Right ventricle myocardium superior (tissue), 1 donor: ENCODE measurements at regions of chr1 and their contacts with region 1.

Region 1: GRCh38 chr1:24201941-24202440 is 14.9 kb upstream of the IFNLR1 start:
- DNase-seq: peak; percentile 71
- ATAC-seq: peak; percentile 81

Region 2: DNA sequence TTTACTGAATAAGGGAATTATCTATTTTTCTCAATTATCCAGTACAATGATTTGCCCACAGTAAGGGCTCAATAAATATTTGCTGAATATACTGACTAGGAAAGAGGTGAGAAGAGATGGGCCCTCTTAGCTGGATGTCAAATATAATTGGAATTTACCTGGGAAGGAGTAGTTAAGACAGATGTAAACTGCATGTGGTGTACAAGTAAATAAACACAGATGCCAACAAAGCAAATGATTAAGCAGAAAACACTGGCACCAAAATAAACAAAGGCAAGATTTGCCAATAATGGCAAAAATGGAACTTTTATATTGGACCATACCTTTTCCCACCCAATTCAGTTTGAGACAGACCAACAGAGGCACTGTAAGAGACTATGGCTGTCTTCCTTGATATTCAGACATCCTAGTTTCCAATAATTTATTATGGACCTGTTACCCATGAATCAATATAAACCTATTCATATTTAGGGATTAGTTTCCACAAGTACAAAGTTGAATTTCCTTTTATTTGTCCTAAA is 235.0 kb before region 1 on chr1:
- intact Hi-C with region 1: no loop called
- DNase-seq: no peak
- ATAC-seq: no peak

Region 3: DNA sequence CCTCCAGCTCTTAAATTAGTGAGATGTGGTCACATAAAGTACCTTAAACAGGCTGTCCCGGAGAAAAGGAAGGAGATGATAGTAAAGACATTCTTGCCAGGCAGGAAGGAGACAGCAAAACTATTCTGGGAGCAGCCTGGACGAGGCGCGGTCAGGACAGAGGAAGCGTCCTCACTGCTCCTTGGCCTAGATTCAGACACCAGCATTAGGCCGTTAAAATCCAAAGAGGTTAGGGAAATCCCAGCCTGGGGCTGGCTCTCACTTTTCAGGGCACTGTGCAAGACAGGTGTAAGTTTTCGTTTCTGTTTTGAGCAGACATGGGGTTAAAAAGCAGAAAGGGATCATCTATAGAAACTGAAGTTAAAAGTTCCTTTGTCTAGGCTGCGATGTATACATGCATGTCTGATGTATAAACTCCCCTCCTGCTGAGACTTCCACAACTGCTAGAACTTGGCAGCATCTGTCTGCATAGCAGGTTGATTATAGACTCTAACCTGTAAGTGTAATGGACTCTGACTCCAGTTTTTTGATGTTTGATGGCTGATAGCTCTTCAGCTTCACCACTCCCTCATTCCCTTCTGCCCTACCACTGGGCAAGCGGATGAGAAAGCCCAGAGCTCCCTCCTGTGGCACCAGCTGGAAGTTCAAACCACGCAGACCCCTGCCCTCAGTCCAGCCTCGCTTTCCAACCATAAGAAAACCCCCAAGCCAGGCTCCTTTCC is 190.1 kb after region 1 on chr1:
- intact Hi-C with region 1: loop called (anchors 1 kb)
- DNase-seq: peak; percentile 62
- ATAC-seq: peak; percentile 90

Region 4: DNA sequence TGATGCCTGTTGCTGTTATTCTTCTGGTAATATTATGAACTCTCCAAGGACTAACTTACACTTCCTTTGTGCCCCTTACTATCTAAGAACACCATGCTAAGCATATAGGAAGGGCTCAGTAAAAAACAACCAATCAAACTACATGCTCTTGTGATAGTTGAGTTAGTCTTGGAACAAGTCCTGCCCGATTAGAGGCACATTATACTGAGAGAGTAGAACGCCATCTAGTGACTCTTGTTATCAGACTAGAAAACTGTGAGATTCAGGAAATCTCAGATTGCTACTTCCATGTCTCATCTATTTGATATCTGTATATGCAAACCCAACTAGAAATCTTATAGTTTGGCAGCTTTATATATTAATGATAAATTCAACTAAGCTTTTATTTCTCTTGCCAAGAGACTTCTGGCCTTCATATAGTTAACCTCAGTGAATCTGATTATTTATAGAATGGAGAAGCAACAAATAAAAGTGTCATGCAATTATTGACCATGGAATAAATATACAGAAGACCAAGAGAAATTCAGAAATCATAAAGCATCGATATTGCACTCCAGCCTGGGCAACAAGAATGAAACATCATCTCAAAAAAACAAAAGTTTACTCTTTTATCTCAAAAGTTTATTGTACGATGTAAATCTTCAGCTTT is 433.3 kb after region 1 on chr1:
- intact Hi-C with region 1: loop called (anchors 10 kb)
- DNase-seq: no peak
- ATAC-seq: peak; percentile 68